Common myeloid progenitor, CD34-positive (primary cell): ENCODE measurements at regions of chr14 and their contacts with region 1.

Region 1: DNA sequence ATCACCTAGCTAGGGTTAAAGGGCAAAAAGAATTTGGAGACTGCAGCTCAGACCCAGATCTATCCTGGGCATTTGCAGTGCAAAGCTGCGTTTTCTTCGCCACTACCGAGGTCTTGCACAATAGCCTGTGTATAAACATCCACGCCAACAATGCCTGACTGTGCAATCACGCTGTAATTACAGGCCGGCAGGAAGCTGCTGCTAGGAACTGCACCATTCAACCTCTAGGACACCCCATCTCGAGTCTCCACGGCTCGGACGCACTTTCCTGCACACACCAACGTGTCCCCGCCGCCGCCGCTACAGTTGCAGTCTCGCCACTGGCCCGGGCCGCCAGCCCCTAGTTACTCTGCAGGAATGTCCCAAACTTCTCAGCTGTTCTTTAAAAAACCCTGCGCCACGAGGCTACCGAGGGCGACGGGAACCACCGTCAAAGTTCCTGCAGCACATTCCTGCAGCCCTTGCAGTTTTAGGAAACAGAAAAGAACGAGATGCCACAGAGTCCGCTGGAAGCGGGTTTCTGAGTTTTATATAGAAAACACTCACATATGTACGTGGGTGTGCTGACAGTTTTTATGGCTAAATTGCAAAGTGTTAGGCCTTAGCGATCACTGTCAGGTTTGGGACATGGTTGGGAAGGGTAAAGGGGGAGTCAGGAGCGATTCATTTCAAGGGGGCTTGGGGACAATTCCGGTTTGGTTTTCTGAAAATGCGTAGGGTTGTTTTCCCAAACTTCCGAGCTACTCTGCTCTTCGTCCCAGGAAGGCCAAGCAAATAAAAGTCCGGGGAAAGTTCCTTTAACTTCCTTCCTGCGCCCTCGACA is 65.5 kb upstream of the PTGR2 start:
- DNase-seq: peak; percentile 82 to 93 (median 91)
- H3K4me3 ChIP-seq: peak overlapping the region; percentile 74 to 91 (median 85)
- H3K27ac ChIP-seq: peak overlapping the region; percentile 71 to 94
- H3K4me1 ChIP-seq: peaks cover 30 to 75% (median 51%) of the 10 kb centered on the region in 4 experiments
- H3K27me3 ChIP-seq: no peaks in the 10 kb centered on the region

Region 2: GRCh38 chr14:73753959-73754882 is 31.9 kb before region 1 on chr14:
- CTCF ChIA-PET with region 1: interaction called, 30 read pairs
- POLR2A ChIA-PET with region 1: interaction called, 27 read pairs
- DNase-seq: peak; percentile 88 to 97 (median 97)
- H3K4me3 ChIP-seq: peak overlapping the region; percentile 20 to 84 (median 59)
- H3K27ac ChIP-seq: peak overlapping the region; percentile 99
- H3K4me1 ChIP-seq: peaks cover 37 to 98% (median 96%) of the 10 kb centered on the region in 4 experiments
- H3K27me3 ChIP-seq: no peaks in the 10 kb centered on the region

Region 3: DNA sequence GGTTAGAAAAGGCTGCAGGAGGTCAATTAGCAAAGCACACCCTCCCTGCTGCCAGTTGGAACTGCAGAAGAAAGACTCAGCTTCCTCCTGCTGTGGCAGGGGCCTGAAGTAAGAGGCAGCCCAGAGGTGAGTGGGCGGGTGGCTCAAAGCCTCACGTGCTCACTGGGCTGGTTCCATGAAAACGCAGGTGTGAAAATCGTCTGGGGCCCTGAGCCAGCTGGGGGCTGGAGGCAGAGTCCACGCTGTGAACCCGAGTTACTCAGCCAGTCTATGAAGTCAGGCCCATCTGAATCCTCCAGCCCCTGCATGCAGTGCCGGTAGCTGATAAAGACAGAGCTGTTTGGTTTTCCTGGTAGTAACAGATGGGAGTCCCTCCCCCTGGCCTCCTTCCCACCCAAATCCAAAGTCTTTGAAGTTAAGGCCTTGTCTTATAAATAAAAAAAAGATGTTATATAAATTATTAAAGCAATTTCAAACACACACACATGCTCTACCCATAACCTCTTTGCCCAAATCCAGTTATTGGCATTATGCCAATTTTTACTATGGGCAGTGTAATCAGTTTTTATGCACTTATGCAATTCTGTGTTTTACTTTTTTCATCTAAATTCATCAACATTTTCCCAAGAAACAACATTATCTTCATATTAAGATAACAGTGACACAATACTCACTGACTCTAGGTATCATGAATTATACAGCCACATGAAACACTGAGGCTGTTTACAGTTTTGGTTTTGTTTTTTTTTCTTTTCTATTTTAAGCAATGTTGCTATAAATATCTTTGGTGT is 14.0 kb before region 1 on chr14:
- CTCF ChIA-PET with region 1: interaction called, 43 read pairs
- POLR2A ChIA-PET with region 1: interaction called, 3 read pairs
- DNase-seq: peak; percentile 55 to 88 (median 78)
- H3K4me3 ChIP-seq: peak overlapping the region in 3 of 7 experiments; percentile 13 to 37 (median 26)
- H3K27ac ChIP-seq: peak overlapping the region in 1 of 2 experiments; percentile 75
- H3K4me1 ChIP-seq: peaks cover 20 to 57% (median 42%) of the 10 kb centered on the region in 4 experiments
- H3K27me3 ChIP-seq: no peaks in the 10 kb centered on the region